Posterior vena cava (tissue), 2 donors: ENCODE measurements at regions of chr17 and their contacts with region 1.

Region 1: DNA sequence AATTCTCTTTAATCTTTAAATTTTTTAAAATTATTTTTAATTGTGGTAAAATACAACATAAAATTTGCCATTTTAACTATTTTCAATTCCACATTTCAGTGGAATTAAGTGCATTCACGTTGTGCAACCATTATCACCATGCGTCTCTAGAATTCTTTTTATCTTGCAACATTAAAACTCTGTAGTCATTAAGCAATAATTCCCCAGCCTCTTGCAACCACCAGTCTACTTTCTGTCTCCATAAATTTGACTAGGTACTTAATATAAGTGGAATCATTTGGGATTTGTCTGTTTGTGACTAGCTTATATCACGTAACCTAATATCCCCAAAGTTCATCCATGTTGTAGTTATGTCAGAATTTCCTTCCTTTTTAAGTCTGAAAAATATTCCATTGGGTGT is 79.1 kb downstream of the TAOK1 start:
- DNase-seq: no peak

Region 2: DNA sequence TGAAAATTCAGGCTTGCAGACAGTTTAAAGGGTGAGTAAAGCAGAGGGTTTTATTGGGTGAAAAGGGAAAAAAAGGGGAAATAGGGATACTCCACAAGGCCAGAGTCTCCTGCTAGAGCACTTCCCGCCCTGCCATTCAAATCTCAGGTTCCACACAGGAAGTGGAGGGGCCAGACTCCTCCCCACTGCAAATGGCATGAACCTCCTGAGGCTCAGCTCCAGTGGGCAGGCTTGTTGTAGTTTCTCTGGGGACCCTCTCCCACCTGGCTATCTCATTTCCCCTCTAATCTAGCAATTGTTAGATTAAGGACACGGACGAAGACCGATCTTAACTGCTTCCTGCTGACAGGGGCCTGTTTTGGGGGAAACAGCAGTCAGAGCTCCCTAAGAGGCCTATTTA is 35.7 kb before region 1 on chr17:
- intact Hi-C with region 1: loop called in 1 of 2 experiments (anchors 1 kb)
- DNase-seq: no peak

Region 3: GRCh38 chr17:29504711-29505110 is 35.4 kb after region 1 on chr17:
- intact Hi-C with region 1: no loop called
- DNase-seq: no peak

Region 4: GRCh38 chr17:29579866-29580771 is 110.8 kb after region 1 on chr17:
- intact Hi-C with region 1: no loop called
- DNase-seq: peak; percentile 94